ENCODE measurements at regions of chr16 and their contacts with region 1.

Region 1: DNA sequence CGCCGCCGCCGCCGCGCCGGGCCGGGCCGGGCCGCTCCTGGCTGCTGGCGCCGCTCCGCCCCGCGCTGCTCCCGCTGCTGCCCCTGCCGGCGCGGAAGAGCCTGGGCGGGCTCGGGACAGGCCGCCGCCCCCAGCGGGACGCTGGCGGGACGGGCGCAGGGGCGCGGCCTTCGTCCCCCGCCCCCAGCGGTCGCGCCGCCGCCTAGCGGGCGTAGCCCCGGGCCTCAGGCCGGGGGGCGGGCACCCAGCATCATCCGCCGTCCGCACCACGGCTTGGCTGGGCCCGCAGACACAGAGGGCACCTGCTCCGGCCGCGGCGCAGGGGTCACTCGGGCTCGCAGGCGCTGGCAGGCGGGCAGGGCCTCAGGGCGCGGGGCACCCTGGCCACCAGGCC is at the start of gene AMFR:
- DNase-seq: peak; percentile 58 to 76
- ATAC-seq: peak; percentile 92 to 97 (median 95)
- H3K4me3 ChIP-seq: peak within 1 kb of the TSS; percentile 37 to 89 (median 79)
- H3K27ac ChIP-seq: peak within 1 kb of the TSS; percentile 41 to 92 (median 90)
- H3K4me1 ChIP-seq: peaks cover 3 to 40% (median 26%) of the 10 kb centered on the region in 9 donors
- H3K27me3 ChIP-seq: no peaks in the 10 kb centered on the region
- CTCF ChIP-seq: peak; percentile 34 to 72 (median 50)
- total RNA-seq, gene AMFR: 50.6 to 87.9 (median 69.7) TPM

Region 2: DNA sequence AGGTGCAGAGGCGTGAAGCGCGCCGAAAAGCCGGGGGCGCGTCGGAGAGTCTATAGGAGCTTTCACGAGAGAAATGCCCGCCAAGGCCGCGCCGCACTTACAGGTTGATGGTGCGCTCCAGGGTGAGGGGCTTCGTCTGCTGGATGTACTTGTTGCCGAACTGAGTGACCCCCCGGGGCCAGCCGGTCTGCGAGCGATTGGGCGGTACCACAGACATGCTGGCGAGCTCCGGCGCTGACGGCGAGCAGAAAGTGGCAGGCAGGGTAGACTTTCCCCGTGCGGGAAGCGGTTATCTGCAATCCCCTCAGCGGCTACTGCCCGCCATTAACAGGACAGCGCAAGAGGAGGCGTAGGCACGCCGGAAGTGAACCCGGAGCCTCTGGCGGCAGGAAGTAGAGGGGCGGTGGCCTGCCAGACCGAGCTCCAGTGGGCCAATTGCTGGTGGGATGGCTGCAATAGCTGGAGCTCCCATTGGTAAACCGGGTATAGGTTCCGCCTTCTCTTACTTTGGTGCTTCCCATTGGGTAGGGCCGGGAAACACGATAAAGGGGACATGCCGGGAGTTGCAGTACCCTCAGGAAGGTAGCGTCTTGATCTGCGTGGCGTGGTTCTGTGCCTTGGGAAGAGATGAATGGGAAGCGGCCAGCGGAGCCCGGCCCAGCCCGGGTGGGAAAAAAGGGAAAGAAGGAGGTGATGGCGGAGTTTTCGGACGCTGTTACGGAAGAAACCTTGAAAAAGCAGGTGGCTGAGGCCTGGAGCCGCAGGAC is 25.7 kb after region 1 on chr16 and contains the starts of genes NUDT21 and OGFOD1:
- intact Hi-C with region 1: loop called in 2 of 10 experiments (anchors 1 to 2 kb)
- DNase-seq: peak; percentile 91 to 96
- ATAC-seq: peak; percentile 98 to 100 (median 99)
- H3K4me3 ChIP-seq: peak within 1 kb of the TSS; percentile 82 to 99 (median 92)
- H3K27ac ChIP-seq: peak within 1 kb of the TSS; percentile 61 to 90 (median 86)
- H3K4me1 ChIP-seq: peaks cover 4 to 51% (median 39%) of the 10 kb centered on the region in 9 donors
- H3K27me3 ChIP-seq: no peaks in the 10 kb centered on the region
- CTCF ChIP-seq: peak in 1 of 9 donors; percentile 12
- total RNA-seq, gene NUDT21: 59.2 to 74.7 (median 63.4) TPM
- total RNA-seq, gene OGFOD1: 24.2 to 41.0 (median 36.8) TPM

Region 3: DNA sequence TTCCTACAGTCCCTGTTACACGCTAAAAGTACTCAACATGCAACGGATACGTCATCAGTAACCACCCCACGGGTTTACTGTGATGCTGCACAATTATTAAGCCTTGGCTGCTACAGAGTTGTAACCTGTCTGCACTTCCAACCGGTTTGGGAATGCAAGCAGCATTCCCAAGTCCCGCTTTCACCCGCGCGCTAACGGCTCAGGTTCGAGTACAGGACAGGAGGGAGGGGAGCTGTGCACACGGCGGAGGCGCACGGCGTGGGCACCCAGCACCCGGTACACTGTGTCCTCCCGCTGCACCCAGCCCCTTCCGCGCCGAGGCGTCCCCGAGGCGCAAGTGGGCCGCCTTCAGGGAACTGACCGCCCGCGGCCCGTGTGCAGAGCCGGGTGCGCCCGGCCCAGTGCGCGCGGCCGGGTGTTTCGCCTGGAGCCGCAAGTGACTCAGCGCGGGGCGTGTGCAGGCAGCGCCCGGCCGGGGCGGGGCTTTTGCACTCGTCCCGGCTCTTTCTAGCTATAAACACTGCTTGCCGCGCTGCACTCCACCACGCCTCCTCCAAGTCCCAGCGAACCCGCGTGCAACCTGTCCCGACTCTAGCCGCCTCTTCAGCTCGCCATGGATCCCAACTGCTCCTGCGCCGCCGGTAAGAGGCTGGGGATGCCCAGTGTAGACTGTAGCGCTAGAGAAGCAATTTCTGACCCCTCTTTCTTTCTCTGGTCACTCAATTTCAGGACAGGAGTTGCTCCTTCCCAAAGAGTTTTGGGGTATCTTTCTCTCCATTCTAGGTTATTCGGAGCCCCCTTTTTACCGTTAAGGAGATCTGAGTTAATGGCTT is 182.8 kb after region 1 on chr16 and contains the start of gene MT2A:
- intact Hi-C with region 1: no loop called
- DNase-seq: peak; percentile 94 to 96
- ATAC-seq: peak; percentile 78 to 89 (median 87)
- H3K4me3 ChIP-seq: peak within 1 kb of the TSS; percentile 52 to 78 (median 72)
- H3K27ac ChIP-seq: peak within 1 kb of the TSS; percentile 84 to 99 (median 93)
- H3K4me1 ChIP-seq: peaks cover 25 to 68% (median 60%) of the 10 kb centered on the region in 9 donors
- H3K27me3 ChIP-seq: no peaks in the 10 kb centered on the region
- CTCF ChIP-seq: peak in 1 of 9 donors; percentile 6
- total RNA-seq, gene MT2A: 88.8 to 354 (median 109) TPM

Measured in heart right ventricle (tissue), 16 donors.